ENCODE measurements at regions of chr5 and their contacts with region 1.

Region 1: DNA sequence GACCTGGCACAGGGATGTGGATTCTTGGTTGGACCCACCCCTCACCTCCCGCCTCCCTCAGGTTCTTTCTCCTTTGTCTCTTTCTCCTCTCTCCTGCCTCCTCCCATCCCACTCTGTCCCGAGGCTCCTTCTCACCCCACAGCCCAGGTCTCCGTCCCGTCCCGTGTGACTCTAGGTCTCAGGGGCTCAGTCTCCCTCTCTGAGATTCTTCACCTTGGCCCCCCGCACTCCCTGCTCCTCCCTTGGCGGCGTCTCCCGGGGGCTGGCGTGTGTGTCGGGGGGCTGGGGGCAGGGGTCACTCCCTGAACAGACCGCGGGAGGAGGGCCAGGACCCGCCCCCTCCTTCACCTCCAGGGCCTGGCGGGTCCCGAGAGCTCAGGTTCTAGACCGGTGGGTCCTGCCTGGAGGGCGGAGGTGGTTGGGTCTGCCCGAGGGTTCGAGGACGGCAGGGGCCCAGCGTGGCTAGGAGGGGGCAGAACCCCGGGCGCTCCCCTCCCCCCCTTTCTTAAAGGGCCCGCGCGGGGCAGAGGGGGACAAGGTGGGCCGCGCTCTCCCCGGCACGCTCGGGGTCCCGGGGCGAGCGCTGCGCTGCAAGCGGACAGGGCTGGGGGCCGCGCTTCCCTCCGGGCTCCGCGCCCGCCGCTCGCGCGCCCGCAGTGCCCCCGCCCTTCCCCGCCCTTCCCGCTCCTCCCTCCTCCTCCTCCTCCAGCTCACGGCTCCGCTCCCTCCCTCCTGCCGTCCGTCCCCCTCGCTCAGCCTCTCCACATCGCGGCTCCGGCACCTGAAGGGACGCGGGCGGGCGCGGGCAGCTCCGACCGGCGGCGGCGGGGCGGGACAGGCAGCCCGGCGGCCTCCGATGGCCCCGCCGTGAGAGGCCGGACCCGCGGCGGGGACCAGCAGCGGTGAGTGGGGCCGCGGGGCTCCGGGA is at the start of gene PSD2:
- DNase-seq: peak in 1 of 2 donors; percentile 35
- H3K4me3 ChIP-seq: peak within 1 kb of the TSS in 1 of 2 donors; percentile 34
- H3K27ac ChIP-seq: no peak within 1 kb of the TSS
- H3K4me1 ChIP-seq: peaks cover 0 to 13% of the 10 kb centered on the region in 2 donors
- H3K27me3 ChIP-seq: peaks cover 0 to 12% of the 10 kb centered on the region in 2 donors
- CTCF ChIP-seq: no peak
- POLR2A ChIP-seq: no peak
- total RNA-seq, gene PSD2: 0.30 to 0.76 TPM in 2 of 4 donors, not detected in the others

Region 2: DNA sequence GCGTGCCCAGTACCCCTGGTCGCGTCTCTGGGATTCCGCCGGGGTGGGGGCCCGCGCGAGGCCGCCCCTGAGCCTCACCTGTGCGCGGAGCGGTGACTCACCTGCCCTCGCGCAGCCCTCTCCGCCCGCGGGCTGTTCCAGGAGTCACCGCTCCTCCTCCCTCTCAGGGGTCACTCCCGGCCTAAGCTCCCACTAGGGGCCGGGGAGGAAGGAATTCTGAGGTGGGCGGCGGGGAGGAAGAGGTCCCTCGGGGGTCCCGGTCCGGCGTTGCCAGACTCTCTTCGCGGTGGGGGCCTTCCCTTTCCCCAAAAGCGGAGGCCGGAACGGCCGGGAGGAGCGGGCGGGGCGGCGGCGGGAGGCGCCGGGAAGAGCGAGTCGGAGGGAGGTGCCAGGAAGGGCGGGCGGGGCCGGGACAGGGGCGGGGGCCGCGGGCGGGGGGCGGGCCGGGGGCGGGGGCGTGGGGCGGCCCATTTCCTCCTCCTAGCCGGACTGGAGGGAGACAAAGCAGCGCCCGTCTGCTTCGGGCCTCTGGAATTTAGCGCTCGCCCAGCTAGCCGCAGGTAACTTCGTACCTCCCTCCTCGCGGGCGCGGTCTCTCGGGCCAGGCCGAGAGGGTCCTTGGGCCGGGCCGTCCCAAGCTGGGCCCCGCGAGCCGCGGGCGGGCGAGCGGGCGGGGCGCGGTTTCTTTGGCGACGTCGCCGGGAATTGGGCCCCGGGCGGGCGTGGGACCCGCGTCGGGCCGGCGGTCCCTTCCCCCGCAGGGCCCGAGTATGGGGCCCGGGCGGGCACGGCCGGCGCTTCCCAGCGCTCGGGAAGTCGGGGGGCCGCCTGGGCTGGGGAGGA is 1042.2 kb before region 1 on chr5 and contains the start of gene CTNNA1:
- intact Hi-C with region 1: no loop called
- DNase-seq: peak; percentile 82 to 83
- H3K4me3 ChIP-seq: peak within 1 kb of the TSS; percentile 87 to 94
- H3K27ac ChIP-seq: peak within 1 kb of the TSS; percentile 98 to 99
- H3K4me1 ChIP-seq: peaks cover 5 to 14% of the 10 kb centered on the region in 2 donors
- H3K27me3 ChIP-seq: no peaks in the 10 kb centered on the region
- CTCF ChIP-seq: peak in 1 of 4 experiments; percentile 17
- POLR2A ChIP-seq: peak; percentile 62 to 74
- total RNA-seq, gene CTNNA1: 140 to 752 (median 389) TPM

Region 3: GRCh38 chr5:139942243-139942642 is 146.9 kb after region 1 on chr5:
- intact Hi-C with region 1: no loop called
- DNase-seq: no peak
- H3K4me3 ChIP-seq: no peak overlapping the region
- H3K27ac ChIP-seq: no peak overlapping the region
- H3K4me1 ChIP-seq: no peaks in the 10 kb centered on the region
- H3K27me3 ChIP-seq: no peaks in the 10 kb centered on the region
- CTCF ChIP-seq: no peak
- POLR2A ChIP-seq: no peak

Region 4: DNA sequence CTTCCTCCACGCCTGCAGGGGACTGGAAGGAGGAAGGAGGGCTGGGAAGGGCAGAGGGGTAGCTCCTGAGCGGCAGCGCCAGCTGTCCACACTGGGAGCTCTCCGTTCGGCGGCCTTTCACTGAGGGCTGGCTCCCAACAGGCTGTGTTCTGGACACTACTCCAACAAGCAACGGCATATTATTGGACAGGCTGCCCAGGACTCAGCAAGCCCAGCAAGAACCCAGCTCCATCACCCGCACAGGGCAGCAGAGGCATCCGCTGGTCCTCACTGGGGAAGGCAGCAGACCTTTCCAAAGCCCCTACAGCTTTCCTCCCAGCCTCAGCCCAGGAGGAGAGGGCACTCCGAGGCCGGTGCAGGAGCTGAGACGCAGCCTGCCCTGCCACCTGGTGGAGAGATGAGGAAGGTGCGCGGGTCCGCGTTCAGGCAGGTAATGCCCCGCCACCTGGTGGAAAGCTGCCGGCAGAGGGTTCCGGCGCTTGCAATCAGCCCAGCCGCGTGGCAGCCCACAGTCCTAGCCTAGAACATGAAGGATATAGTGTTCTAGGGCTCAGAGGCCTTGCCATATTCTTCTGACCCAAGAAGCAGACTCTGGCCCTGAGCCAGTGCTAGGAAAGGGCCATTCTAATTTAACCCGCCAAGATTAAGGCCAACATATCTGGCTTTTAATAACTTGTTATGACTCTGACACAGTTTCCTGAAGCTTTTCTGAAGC is 173.4 kb after region 1 on chr5:
- intact Hi-C with region 1: loop called (anchors 10 kb)
- DNase-seq: peak; percentile 67 to 84
- H3K4me3 ChIP-seq: no peak overlapping the region
- H3K27ac ChIP-seq: no peak overlapping the region
- H3K4me1 ChIP-seq: no peaks in the 10 kb centered on the region
- H3K27me3 ChIP-seq: no peaks in the 10 kb centered on the region
- CTCF ChIP-seq: peak; percentile 90 to 100 (median 98)
- POLR2A ChIP-seq: no peak

Region 5: GRCh38 chr5:140054086-140054689 is 258.9 kb after region 1 on chr5:
- intact Hi-C with region 1: loop called (anchors 5 kb)
- DNase-seq: no peak
- H3K4me3 ChIP-seq: no peak overlapping the region
- H3K27ac ChIP-seq: no peak overlapping the region
- H3K4me1 ChIP-seq: no peaks in the 10 kb centered on the region
- H3K27me3 ChIP-seq: no peaks in the 10 kb centered on the region
- CTCF ChIP-seq: no peak
- POLR2A ChIP-seq: no peak